Activated B cell treated with CpG ODN at 0.5 μM for 24 hours (primary cell): ENCODE measurements at regions of chr11 and their contacts with region 1.

Region 1: DNA sequence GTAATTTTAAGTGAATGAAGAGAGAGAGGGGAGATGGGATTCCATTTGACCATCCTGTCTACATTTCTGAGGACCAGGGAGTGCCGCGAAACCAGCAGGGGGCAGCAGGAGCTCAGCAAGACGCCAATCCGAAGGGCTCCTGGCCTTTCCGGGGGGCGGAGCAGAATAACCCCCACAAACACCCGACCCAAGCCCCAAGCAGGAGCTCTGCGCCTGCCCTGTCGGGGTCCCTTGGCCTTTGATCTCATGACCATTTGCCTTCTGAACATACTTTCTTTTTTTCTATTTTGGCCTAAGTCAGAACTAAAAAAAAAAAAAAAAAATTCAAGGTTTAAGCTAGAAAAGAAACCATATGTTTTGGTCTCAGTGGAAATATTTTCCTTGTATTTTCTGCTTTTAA is 21.9 kb upstream of the SCN2B start:
- DNase-seq: peak; percentile 70
- ATAC-seq: peak; percentile 90
- H3K4me3 Mint-ChIP-seq: peak overlapping the region; percentile 21
- H3K27ac Mint-ChIP-seq: no peak overlapping the region
- H3K4me1 Mint-ChIP-seq: peaks cover 2% of the 10 kb centered on the region
- H3K27me3 Mint-ChIP-seq: peaks cover 2% of the 10 kb centered on the region
- CTCF ChIP-seq: peak; percentile 65

Region 2: GRCh38 chr11:117443266-117444195 is 754.8 kb before region 1 on chr11:
- CTCF ChIA-PET with region 1: no interaction called
- POLR2A ChIA-PET with region 1: no interaction called
- intact Hi-C with region 1: no loop called
- DNase-seq: no peak
- ATAC-seq: no peak
- H3K4me3 Mint-ChIP-seq: no peak overlapping the region
- H3K27ac Mint-ChIP-seq: no peak overlapping the region
- H3K4me1 Mint-ChIP-seq: no peaks in the 10 kb centered on the region
- H3K27me3 Mint-ChIP-seq: peaks cover 16% of the 10 kb centered on the region
- CTCF ChIP-seq: no peak

Region 3: GRCh38 chr11:117985953-117986887 is 212.2 kb before region 1 on chr11 and contains the start of gene IL10RA:
- CTCF ChIA-PET with region 1: no interaction called
- POLR2A ChIA-PET with region 1: no interaction called
- intact Hi-C with region 1: no loop called
- DNase-seq: peak; percentile 93
- ATAC-seq: peak; percentile 89
- H3K4me3 Mint-ChIP-seq: peak within 1 kb of the TSS; percentile 90
- H3K27ac Mint-ChIP-seq: peak within 1 kb of the TSS; percentile 96
- H3K4me1 Mint-ChIP-seq: peaks cover 89% of the 10 kb centered on the region
- H3K27me3 Mint-ChIP-seq: no peaks in the 10 kb centered on the region
- CTCF ChIP-seq: no peak
- total RNA-seq, gene IL10RA: 303 and 350 TPM in 2 replicates

Region 4: DNA sequence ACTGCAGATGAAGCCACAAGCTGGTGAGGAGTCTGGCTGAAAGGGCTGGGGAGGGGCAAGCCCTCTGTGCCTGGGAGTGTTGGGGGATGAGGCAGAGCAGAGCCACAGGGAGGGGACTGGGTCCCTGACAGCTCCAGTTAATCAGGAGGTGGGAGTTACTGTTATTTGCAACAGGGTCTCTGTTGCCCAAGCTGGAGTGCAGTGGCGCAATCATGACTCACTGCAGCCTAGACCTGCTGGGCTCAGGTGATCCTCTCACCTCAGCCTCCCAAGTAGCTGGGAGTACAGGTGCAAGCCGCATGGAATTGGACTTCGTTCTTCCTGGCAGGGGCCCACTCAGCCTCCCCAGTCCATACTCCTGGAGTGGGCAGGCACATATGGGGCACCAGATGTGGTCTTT is 29.6 kb before region 1 on chr11:
- CTCF ChIA-PET with region 1: no interaction called
- POLR2A ChIA-PET with region 1: no interaction called
- intact Hi-C with region 1: no loop called
- DNase-seq: no peak
- ATAC-seq: no peak
- H3K4me3 Mint-ChIP-seq: no peak overlapping the region
- H3K27ac Mint-ChIP-seq: no peak overlapping the region
- H3K4me1 Mint-ChIP-seq: no peaks in the 10 kb centered on the region
- H3K27me3 Mint-ChIP-seq: peaks cover 33% of the 10 kb centered on the region
- CTCF ChIP-seq: no peak

Region 5: GRCh38 chr11:118263695-118264567 is 65.6 kb after region 1 on chr11 and contains the start of gene MPZL2:
- CTCF ChIA-PET with region 1: interaction called, 18 read pairs
- POLR2A ChIA-PET with region 1: no interaction called
- intact Hi-C with region 1: loop called (anchors 2 kb)
- DNase-seq: no peak
- ATAC-seq: peak; percentile 68
- H3K4me3 Mint-ChIP-seq: peak within 1 kb of the TSS; percentile 64
- H3K27ac Mint-ChIP-seq: no peak within 1 kb of the TSS
- H3K4me1 Mint-ChIP-seq: peaks cover 15% of the 10 kb centered on the region
- H3K27me3 Mint-ChIP-seq: peaks cover 47% of the 10 kb centered on the region
- CTCF ChIP-seq: no peak
- total RNA-seq, gene MPZL2: 0.29 TPM in 1 of 2 replicates, not detected in the other

Region 6: DNA sequence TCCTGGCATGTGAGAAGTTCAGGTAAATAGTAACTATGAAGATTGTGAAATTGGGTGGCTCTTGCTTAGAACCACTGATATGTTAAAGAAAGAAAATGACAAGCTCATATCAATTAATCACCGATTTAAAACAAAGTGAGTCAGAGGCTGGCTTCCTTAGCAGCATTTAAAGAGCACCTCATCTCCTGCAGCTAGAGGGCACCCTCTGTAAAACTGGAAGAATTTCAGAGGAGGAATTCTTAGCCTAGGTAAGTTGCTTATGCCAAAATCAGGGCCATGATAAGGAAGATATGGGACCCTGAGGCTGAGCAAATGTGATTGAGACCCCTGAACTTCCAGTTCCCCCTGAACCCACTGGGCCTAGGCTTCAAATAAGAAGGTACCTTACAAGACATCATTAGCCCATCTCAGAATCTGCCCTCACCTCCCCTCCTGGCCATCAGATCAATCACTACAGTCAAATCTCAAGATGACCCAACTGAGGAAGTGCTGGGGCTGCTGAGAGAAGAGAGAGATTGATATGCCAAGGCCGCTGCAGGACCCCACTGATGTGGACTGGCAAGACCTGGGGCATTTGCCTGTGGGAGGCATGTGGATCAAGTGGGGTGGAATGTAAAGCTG is 97.6 kb after region 1 on chr11:
- CTCF ChIA-PET with region 1: interaction called, 54 read pairs
- POLR2A ChIA-PET with region 1: interaction called, 3 read pairs
- intact Hi-C with region 1: loop called (anchors 1 kb)
- DNase-seq: no peak
- ATAC-seq: peak; percentile 34
- H3K4me3 Mint-ChIP-seq: no peak overlapping the region
- H3K27ac Mint-ChIP-seq: no peak overlapping the region
- H3K4me1 Mint-ChIP-seq: no peaks in the 10 kb centered on the region
- H3K27me3 Mint-ChIP-seq: peaks cover 11% of the 10 kb centered on the region
- CTCF ChIP-seq: peak; percentile 44

Region 7: DNA sequence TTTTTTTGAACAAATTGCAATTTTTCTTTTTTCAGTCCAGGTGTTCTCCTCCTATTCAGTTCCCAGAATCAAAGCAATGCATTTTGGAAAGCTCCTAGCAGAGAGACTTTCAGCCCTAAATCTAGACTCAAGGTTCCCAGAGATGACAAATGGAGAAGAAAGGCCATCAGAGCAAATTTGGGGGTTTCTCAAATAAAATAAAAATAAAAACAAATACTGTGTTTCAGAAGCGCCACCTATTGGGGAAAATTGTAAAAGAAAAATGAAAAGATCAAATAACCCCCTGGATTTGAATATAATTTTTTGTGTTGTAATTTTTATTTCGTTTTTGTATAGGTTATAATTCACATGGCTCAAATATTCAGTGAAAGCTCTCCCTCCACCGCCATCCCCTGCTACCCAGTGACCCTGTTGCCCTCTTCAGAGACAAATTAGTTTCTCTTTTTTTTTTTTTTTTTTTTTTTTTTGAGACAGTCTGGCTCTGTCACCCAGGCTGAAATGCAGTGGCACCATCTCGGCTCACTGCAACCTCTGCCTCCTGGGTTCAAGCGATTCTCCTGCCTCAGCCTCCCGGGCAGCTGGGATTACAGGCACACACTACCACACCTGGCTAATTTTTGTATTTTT is 154.8 kb after region 1 on chr11:
- CTCF ChIA-PET with region 1: interaction called, 39 read pairs
- POLR2A ChIA-PET with region 1: no interaction called
- intact Hi-C with region 1: loop called (anchors 1 kb)
- DNase-seq: no peak
- ATAC-seq: no peak
- H3K4me3 Mint-ChIP-seq: no peak overlapping the region
- H3K27ac Mint-ChIP-seq: no peak overlapping the region
- H3K4me1 Mint-ChIP-seq: peaks cover 2% of the 10 kb centered on the region
- H3K27me3 Mint-ChIP-seq: peaks cover 4% of the 10 kb centered on the region
- CTCF ChIP-seq: peak; percentile 40

Region 8: GRCh38 chr11:118565051-118565450 is 366.7 kb after region 1 on chr11:
- CTCF ChIA-PET with region 1: no interaction called
- POLR2A ChIA-PET with region 1: no interaction called
- intact Hi-C with region 1: loop called (anchors 5 kb)
- DNase-seq: no peak
- ATAC-seq: no peak
- H3K4me3 Mint-ChIP-seq: peak overlapping the region; percentile 68
- H3K27ac Mint-ChIP-seq: peak overlapping the region; percentile 20
- H3K4me1 Mint-ChIP-seq: peaks cover 10% of the 10 kb centered on the region
- H3K27me3 Mint-ChIP-seq: no peaks in the 10 kb centered on the region
- CTCF ChIP-seq: no peak